SK-N-SH (cell line): ENCODE measurements at regions of chr3 and their contacts with region 1.

Region 1: GRCh38 chr3:120795017-120795648 is 52.6 kb downstream of the GTF2E1 start:
- DNase-seq: peak; percentile 51
- H3K4me3 ChIP-seq: no peak overlapping the region; a peak in 1 of 4 replicates
- H3K27ac ChIP-seq: no peak overlapping the region
- H3K4me1 ChIP-seq: peaks cover 0 to 17% of the 10 kb centered on the region in 2 experiments; a peak in 2 of 4 replicates
- H3K27me3 ChIP-seq: no peaks in the 10 kb centered on the region
- CTCF ChIP-seq: peak; percentile 94
- EP300 ChIP-seq: no peak
- RAD21 ChIP-seq: peak; percentile 94

Region 2: GRCh38 chr3:120604784-120605183 is 190.3 kb before region 1 on chr3:
- CTCF ChIA-PET with region 1: interaction called, 11 read pairs
- POLR2A ChIA-PET with region 1: no interaction called
- DNase-seq: no peak
- H3K4me3 ChIP-seq: no peak overlapping the region
- H3K27ac ChIP-seq: peak overlapping the region in 1 of 2 experiments; percentile 25; a peak in 1 of 4 replicates
- H3K4me1 ChIP-seq: peaks cover 1 to 32% of the 10 kb centered on the region in 2 experiments; a peak in 3 of 4 replicates
- H3K27me3 ChIP-seq: no peaks in the 10 kb centered on the region
- CTCF ChIP-seq: no peak
- EP300 ChIP-seq: no peak
- RAD21 ChIP-seq: no peak

Region 3: GRCh38 chr3:120765830-120766493 is 29.2 kb before region 1 on chr3:
- CTCF ChIA-PET with region 1: interaction called, 18 read pairs
- POLR2A ChIA-PET with region 1: no interaction called
- DNase-seq: no peak
- H3K4me3 ChIP-seq: no peak overlapping the region
- H3K27ac ChIP-seq: no peak overlapping the region
- H3K4me1 ChIP-seq: peaks cover 3 to 5% of the 10 kb centered on the region in 2 experiments; a peak in 3 of 4 replicates
- H3K27me3 ChIP-seq: no peaks in the 10 kb centered on the region
- CTCF ChIP-seq: no peak
- EP300 ChIP-seq: no peak
- RAD21 ChIP-seq: no peak

Region 4: GRCh38 chr3:120773932-120774331 is 21.2 kb before region 1 on chr3:
- CTCF ChIA-PET with region 1: interaction called, 18 read pairs
- POLR2A ChIA-PET with region 1: no interaction called
- DNase-seq: no peak
- H3K4me3 ChIP-seq: no peak overlapping the region
- H3K27ac ChIP-seq: peak overlapping the region in 1 of 2 experiments; percentile 19; a peak in 2 of 4 replicates
- H3K4me1 ChIP-seq: peaks cover 0 to 6% of the 10 kb centered on the region in 2 experiments; a peak in 2 of 4 replicates
- H3K27me3 ChIP-seq: no peaks in the 10 kb centered on the region
- CTCF ChIP-seq: no peak
- EP300 ChIP-seq: no peak
- RAD21 ChIP-seq: no peak

Region 5: DNA sequence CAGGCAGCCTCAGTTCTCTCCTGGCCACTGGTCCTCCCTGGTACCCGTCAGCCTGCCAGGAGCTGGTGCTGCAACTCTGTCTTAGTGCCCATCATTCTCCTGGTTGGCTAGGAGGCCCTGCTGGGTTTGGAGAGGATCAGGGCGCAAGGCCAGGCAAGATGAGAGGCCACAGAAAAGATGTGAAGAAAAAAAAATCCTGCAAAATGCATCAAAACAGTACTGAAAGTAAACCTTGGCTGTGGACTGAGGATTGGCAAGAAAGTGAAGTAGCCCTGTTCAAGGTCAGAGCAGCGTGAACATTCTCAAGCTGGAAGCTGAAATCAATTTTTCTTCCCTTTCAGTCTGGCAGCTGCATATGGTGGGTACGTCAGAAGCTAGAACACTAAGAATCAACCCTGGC is 21.6 kb after region 1 on chr3:
- CTCF ChIA-PET with region 1: interaction called, 14 read pairs
- POLR2A ChIA-PET with region 1: no interaction called
- DNase-seq: no peak
- H3K4me3 ChIP-seq: no peak overlapping the region
- H3K27ac ChIP-seq: no peak overlapping the region
- H3K4me1 ChIP-seq: no peaks in the 10 kb centered on the region
- H3K27me3 ChIP-seq: no peaks in the 10 kb centered on the region
- CTCF ChIP-seq: no peak
- EP300 ChIP-seq: no peak
- RAD21 ChIP-seq: no peak